Endothelial cell of umbilical vein (primary cell): ENCODE measurements at regions of chr10 and their contacts with region 1.

Region 1: GRCh38 chr10:71727738-71728737 is 8.5 kb upstream of the C10orf105 start:
- DNase-seq: no peak
- H3K4me3 ChIP-seq: no peak overlapping the region
- H3K27ac ChIP-seq: no peak overlapping the region
- H3K4me1 ChIP-seq: peaks cover 3% of the 10 kb centered on the region
- H3K27me3 ChIP-seq: peaks cover 0 to 2% of the 10 kb centered on the region in 2 experiments
- CTCF ChIP-seq: no peak
- POLR2A ChIP-seq: no peak

Region 2: DNA sequence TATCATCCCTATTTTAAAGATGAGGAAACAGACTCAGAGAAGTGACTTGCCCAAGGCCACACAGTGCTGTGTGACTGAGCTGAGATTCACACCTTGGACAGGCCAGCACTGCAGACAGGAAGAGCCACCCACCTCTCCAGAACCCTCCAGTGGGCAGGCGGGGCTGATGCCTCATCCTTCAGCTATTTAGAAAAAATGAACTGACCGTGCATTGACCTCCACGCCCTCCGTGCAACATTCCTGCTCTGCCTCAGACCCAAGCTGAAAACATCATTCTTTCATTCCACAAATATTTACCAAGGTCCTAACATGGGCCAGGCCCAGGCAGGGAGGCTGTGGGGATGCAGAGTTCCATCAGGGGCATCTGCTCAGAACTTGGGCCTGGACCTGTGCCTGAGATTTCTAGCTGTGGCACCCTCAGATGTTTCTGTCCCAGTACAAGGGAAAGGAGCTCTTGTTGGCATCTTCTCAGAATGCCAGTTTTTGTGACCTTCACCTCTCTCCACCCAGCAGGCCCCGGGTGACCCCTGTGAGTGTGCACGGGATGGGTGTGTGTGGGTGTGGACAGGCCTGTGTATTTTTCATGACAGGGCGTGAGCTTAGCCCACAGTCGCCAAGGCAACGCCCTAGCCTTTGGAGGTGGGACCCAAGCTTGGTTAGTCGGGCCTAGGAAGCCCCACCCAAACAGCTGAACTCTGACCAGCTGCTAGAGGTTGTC is 38.8 kb after region 1 on chr10:
- CTCF ChIA-PET with region 1: interaction called, 3 read pairs
- POLR2A ChIA-PET with region 1: no interaction called
- dilution Hi-C with region 1: no loop called
- intact Hi-C with region 1: loop called (anchors 2 kb)
- DNase-seq: peak; percentile 54
- H3K4me3 ChIP-seq: no peak overlapping the region
- H3K27ac ChIP-seq: peak overlapping the region; percentile 79
- H3K4me1 ChIP-seq: peaks cover 34% of the 10 kb centered on the region
- H3K27me3 ChIP-seq: no peaks in the 10 kb centered on the region
- CTCF ChIP-seq: no peak
- POLR2A ChIP-seq: no peak

Region 3: GRCh38 chr10:71771821-71772617 is 44.0 kb after region 1 on chr10:
- CTCF ChIA-PET with region 1: interaction called, 15 read pairs
- POLR2A ChIA-PET with region 1: no interaction called
- dilution Hi-C with region 1: no loop called
- intact Hi-C with region 1: loop called (anchors 2 kb)
- DNase-seq: peak; percentile 32
- H3K4me3 ChIP-seq: no peak overlapping the region
- H3K27ac ChIP-seq: no peak overlapping the region
- H3K4me1 ChIP-seq: peaks cover 36% of the 10 kb centered on the region
- H3K27me3 ChIP-seq: no peaks in the 10 kb centered on the region
- CTCF ChIP-seq: no peak
- POLR2A ChIP-seq: no peak

Region 4: DNA sequence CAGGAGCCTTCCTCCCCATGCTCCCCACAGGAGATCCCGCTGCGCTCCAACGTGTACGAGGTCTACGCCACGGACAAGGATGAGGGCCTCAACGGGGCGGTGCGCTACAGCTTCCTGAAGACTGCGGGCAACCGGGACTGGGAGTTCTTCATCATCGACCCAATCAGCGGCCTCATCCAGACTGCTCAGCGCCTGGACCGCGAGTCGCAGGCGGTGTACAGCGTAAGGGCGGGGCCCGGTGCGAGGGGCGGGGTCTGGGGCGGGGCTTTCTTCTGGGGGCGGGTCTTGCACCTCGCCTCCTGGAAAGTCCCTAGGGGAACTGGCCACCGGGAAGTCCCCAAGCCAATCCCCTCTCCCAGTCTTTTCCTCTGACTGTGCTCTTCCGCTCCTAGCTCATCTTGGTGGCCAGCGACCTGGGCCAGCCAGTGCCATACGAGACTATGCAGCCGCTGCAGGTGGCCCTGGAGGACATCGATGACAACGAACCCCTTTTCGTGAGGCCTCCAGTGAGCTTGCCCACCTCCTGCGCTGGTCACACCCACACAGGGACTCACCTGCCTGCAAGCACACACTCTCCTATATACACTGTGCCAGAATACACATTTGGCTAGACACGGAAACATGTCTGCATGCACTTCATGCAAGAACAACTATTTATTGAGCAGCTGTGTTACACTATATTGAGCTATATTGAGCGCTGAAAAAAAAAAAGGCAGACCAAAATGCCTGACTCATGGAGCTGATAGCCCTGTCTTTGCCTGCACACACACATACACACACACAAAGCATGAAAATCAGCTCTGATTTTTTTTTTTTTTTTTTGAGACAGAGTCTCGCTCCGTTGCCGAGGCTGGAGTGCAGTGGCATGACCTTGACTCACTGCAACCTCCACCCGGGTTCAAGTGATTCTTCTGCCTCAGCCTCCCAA is 78.0 kb after region 1 on chr10:
- CTCF ChIA-PET with region 1: interaction called, 5 read pairs
- POLR2A ChIA-PET with region 1: no interaction called
- dilution Hi-C with region 1: no loop called
- intact Hi-C with region 1: loop called (anchors 5 kb)
- DNase-seq: no peak
- H3K4me3 ChIP-seq: no peak overlapping the region
- H3K27ac ChIP-seq: no peak overlapping the region
- H3K4me1 ChIP-seq: no peaks in the 10 kb centered on the region
- H3K27me3 ChIP-seq: peaks cover 0 to 2% of the 10 kb centered on the region in 2 experiments
- CTCF ChIP-seq: no peak
- POLR2A ChIP-seq: no peak

Region 5: GRCh38 chr10:71829171-71829570 is 101.1 kb after region 1 on chr10:
- CTCF ChIA-PET with region 1: no interaction called
- POLR2A ChIA-PET with region 1: no interaction called
- dilution Hi-C with region 1: no loop called
- intact Hi-C with region 1: no loop called
- DNase-seq: no peak
- H3K4me3 ChIP-seq: no peak overlapping the region
- H3K27ac ChIP-seq: no peak overlapping the region
- H3K4me1 ChIP-seq: peaks cover 7% of the 10 kb centered on the region
- H3K27me3 ChIP-seq: no peaks in the 10 kb centered on the region
- CTCF ChIP-seq: no peak
- POLR2A ChIP-seq: no peak